ENCODE measurements at regions of chr17 and their contacts with region 1.

Region 1: DNA sequence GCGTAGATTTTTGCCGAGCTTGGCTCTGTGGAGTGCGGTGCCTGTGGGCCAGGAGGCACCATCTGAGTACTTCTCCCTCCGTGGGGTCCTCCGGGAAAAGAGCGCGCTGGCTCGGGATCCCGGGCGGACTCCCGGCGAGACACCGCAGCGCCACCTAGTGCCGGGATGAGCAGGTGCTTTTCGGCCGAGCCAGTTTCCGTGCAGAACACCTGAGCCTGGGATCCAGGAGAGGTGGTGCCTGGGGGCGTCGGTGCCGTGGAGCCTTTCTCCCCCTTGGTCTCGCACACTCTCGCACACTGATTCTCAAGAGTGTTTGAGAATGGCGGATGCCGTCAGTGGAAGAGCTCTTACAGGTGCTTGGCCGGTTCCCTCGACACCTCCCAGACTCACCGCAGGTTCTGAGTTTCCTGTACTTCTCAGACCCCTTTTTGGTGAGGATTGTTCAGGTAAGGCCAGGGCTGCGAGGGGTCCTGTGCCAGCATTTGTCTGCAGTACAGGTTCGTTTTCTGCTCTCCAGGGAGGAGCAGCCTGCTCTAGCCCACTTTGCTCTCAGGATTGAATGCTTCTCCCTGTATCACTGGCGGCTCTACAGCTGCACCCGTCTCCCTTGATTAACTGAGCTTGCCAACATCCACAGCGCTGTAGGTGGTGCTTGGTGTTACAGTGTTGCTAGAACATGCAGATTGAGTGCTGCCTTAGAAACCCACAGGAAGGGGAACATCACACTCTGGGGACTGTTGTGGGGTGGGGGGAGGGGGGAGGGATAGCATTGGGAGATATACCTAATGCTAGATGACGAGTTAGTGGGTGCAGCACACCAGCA is 23.3 kb downstream of the TBCD start:
- DNase-seq: peak; percentile 67
- ATAC-seq: peak; percentile 84
- H3K4me3 ChIP-seq: peak overlapping the region in 2 of 5 experiments; percentile 29 to 39
- H3K4me3 Mint-ChIP-seq: peak overlapping the region; percentile 70
- H3K27ac ChIP-seq: peak overlapping the region in 1 of 2 donors; percentile 20
- H3K27ac Mint-ChIP-seq: peak overlapping the region; percentile 32
- H3K4me1 ChIP-seq: peaks cover 16 to 29% of the 10 kb centered on the region in 2 donors
- H3K4me1 Mint-ChIP-seq: peaks cover 21% of the 10 kb centered on the region
- H3K27me3 ChIP-seq: no peaks in the 10 kb centered on the region
- H3K27me3 Mint-ChIP-seq: no peaks in the 10 kb centered on the region
- CTCF ChIP-seq: peak; percentile 77

Region 2: GRCh38 chr17:82351716-82352488 is 423.3 kb before region 1 on chr17:
- CTCF ChIA-PET with region 1: no interaction called
- POLR2A ChIA-PET with region 1: no interaction called
- intact Hi-C with region 1: loop called (anchors 2 kb)
- DNase-seq: peak; percentile 89
- ATAC-seq: peak; percentile 90
- H3K4me3 ChIP-seq: no peak overlapping the region
- H3K4me3 Mint-ChIP-seq: no peak overlapping the region
- H3K27ac ChIP-seq: no peak overlapping the region
- H3K27ac Mint-ChIP-seq: no peak overlapping the region
- H3K4me1 ChIP-seq: peaks cover 10 to 14% of the 10 kb centered on the region in 2 donors
- H3K4me1 Mint-ChIP-seq: peaks cover 5% of the 10 kb centered on the region
- H3K27me3 ChIP-seq: peaks cover 0 to 27% (median 6%) of the 10 kb centered on the region in 4 experiments
- H3K27me3 Mint-ChIP-seq: peaks cover 13% of the 10 kb centered on the region
- CTCF ChIP-seq: peak; percentile 97

Region 3: GRCh38 chr17:82668631-82669099 is 106.5 kb before region 1 on chr17:
- CTCF ChIA-PET with region 1: interaction called, 25 read pairs
- POLR2A ChIA-PET with region 1: interaction called, 3 read pairs
- intact Hi-C with region 1: loop called (anchors 2 kb)
- DNase-seq: peak; percentile 66
- ATAC-seq: peak; percentile 91
- H3K4me3 ChIP-seq: peak overlapping the region in 2 of 5 experiments; percentile 19 to 36
- H3K4me3 Mint-ChIP-seq: peak overlapping the region; percentile 65
- H3K27ac ChIP-seq: no peak overlapping the region
- H3K27ac Mint-ChIP-seq: no peak overlapping the region
- H3K4me1 ChIP-seq: peaks cover 0 to 6% of the 10 kb centered on the region in 2 donors
- H3K4me1 Mint-ChIP-seq: peaks cover 6% of the 10 kb centered on the region
- H3K27me3 ChIP-seq: no peaks in the 10 kb centered on the region
- H3K27me3 Mint-ChIP-seq: no peaks in the 10 kb centered on the region
- CTCF ChIP-seq: peak; percentile 59

Region 4: GRCh38 chr17:82802075-82802780 is 27.0 kb after region 1 on chr17:
- CTCF ChIA-PET with region 1: no interaction called
- POLR2A ChIA-PET with region 1: no interaction called
- intact Hi-C with region 1: no loop called
- DNase-seq: no peak
- ATAC-seq: no peak
- H3K4me3 ChIP-seq: no peak overlapping the region
- H3K4me3 Mint-ChIP-seq: no peak overlapping the region
- H3K27ac ChIP-seq: no peak overlapping the region
- H3K27ac Mint-ChIP-seq: no peak overlapping the region
- H3K4me1 ChIP-seq: no peaks in the 10 kb centered on the region
- H3K4me1 Mint-ChIP-seq: no peaks in the 10 kb centered on the region
- H3K27me3 ChIP-seq: no peaks in the 10 kb centered on the region
- H3K27me3 Mint-ChIP-seq: no peaks in the 10 kb centered on the region
- CTCF ChIP-seq: no peak

Region 5: GRCh38 chr17:83200202-83200699 is 425.0 kb after region 1 on chr17:
- CTCF ChIA-PET with region 1: interaction called, 65 read pairs
- POLR2A ChIA-PET with region 1: no interaction called
- intact Hi-C with region 1: no loop called
- DNase-seq: peak; percentile 69
- ATAC-seq: peak; percentile 44
- H3K4me3 ChIP-seq: peak overlapping the region in 4 of 5 experiments; percentile 11 to 63 (median 38)
- H3K4me3 Mint-ChIP-seq: peak overlapping the region; percentile 95
- H3K27ac ChIP-seq: peak overlapping the region; percentile 73 to 84
- H3K27ac Mint-ChIP-seq: peak overlapping the region; percentile 97
- H3K4me1 ChIP-seq: peaks cover 27 to 33% of the 10 kb centered on the region in 2 donors
- H3K4me1 Mint-ChIP-seq: peaks cover 36% of the 10 kb centered on the region
- H3K27me3 ChIP-seq: peaks cover 0 to 5% (median 0%) of the 10 kb centered on the region in 4 experiments
- H3K27me3 Mint-ChIP-seq: no peaks in the 10 kb centered on the region
- CTCF ChIP-seq: no peak

Measured in B cell (primary cell).